Testis (tissue), 5 donors: ENCODE measurements at regions of chr9 and their contacts with region 1.

Region 1: GRCh38 chr9:17116400-17116837 is 18.4 kb upstream of the CNTLN start:
- DNase-seq: no peak
- H3K4me3 ChIP-seq: no peak overlapping the region
- H3K27ac ChIP-seq: peak overlapping the region in 1 of 2 donors; percentile 26
- H3K4me1 ChIP-seq: no peaks in the 10 kb centered on the region
- H3K27me3 ChIP-seq: no peaks in the 10 kb centered on the region
- CTCF ChIP-seq: peak; percentile 29 to 51 (median 37)
- POLR2A ChIP-seq: no peak

Region 2: DNA sequence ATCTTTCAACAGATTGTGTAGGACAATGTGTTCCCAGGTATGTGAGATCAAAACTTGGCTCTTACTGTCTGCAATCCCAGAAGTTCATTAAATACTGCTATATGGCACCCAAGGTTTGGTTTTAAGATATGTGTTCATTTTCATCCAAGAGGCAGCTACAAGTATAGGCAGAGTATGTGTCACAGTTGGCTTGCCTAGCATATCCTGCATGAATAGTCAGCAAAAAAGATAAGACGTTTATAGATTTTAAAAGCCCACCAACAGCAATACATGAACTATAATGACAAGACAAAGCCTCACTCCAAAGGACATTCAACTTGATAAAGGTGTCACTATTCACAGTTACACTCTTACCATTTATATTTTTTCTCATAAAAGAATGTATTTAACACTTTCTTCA is 345.1 kb before region 1 on chr9:
- intact Hi-C with region 1: no loop called
- DNase-seq: no peak
- H3K4me3 ChIP-seq: no peak overlapping the region
- H3K27ac ChIP-seq: no peak overlapping the region
- H3K4me1 ChIP-seq: no peaks in the 10 kb centered on the region
- H3K27me3 ChIP-seq: no peaks in the 10 kb centered on the region
- CTCF ChIP-seq: no peak
- POLR2A ChIP-seq: no peak

Region 3: DNA sequence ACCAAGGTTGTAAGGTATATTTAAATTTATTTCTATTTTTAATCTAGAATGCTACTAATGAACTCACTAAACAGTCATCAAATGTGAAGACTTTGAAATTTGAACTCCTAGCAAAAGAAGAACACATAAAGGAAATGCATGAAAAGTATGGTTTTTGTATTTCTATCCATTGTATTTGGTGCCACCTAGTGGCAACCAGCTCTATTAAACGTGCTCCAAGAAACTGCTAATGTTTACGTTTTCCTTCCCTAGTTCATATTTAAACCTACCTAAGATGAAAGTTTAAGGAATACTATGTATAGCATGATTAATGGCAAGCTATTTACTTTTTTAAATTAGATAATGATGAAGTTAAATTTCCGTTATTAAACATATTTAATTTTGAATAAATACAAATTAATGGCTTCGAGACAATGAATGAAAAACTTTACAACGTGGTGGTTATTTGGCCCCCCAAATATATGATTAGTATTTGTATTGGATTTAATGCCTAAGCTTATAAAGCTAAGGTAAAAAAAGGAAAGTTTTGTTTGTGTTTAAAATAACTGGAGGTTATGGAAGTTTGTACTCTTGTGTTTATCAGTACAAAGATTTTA is 346.5 kb after region 1 on chr9:
- intact Hi-C with region 1: loop called (anchors 10 kb)
- DNase-seq: peak; percentile 65
- H3K4me3 ChIP-seq: no peak overlapping the region
- H3K27ac ChIP-seq: no peak overlapping the region
- H3K4me1 ChIP-seq: no peaks in the 10 kb centered on the region
- H3K27me3 ChIP-seq: no peaks in the 10 kb centered on the region
- CTCF ChIP-seq: peak; percentile 44 to 78 (median 61)
- POLR2A ChIP-seq: no peak

Region 4: DNA sequence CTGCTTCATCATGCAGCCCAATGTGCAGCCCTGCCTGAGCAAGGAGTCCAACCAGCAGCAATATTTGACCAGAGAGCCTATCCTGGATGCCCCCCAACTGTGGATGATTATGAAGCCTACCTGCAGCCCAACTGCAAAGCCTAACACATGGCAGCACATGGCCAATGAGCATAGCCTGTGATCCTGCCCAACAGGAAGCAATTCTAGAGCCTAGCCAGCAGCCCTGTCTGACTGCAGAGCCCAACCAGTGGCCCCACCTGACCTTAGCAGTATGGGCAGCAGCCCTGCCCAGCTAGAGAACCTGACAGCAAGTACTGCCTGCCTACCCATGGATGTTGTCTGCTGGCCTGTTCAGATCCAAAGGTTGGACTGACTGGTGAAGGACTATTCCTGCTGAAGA is 365.1 kb after region 1 on chr9:
- intact Hi-C with region 1: no loop called
- DNase-seq: no peak
- H3K4me3 ChIP-seq: no peak overlapping the region
- H3K27ac ChIP-seq: no peak overlapping the region
- H3K4me1 ChIP-seq: peaks cover 3% of the 10 kb centered on the region
- H3K27me3 ChIP-seq: no peaks in the 10 kb centered on the region
- CTCF ChIP-seq: no peak
- POLR2A ChIP-seq: no peak